IMR-90 (cell line): ENCODE measurements at regions of chr2 and their contacts with region 1.

Region 1: GRCh38 chr2:148720501-148721001 is 76.0 kb downstream of the EPC2 start:
- DNase-seq: peak; percentile 57
- ATAC-seq: peak; percentile 75
- H3K4me3 ChIP-seq: no peak overlapping the region
- H3K27ac ChIP-seq: no peak overlapping the region
- H3K4me1 ChIP-seq: peaks cover 11% of the 10 kb centered on the region
- H3K27me3 ChIP-seq: no peaks in the 10 kb centered on the region
- CTCF ChIP-seq: no peak
- POLR2A ChIP-seq: no peak
- RAD21 ChIP-seq: no peak

Region 2: DNA sequence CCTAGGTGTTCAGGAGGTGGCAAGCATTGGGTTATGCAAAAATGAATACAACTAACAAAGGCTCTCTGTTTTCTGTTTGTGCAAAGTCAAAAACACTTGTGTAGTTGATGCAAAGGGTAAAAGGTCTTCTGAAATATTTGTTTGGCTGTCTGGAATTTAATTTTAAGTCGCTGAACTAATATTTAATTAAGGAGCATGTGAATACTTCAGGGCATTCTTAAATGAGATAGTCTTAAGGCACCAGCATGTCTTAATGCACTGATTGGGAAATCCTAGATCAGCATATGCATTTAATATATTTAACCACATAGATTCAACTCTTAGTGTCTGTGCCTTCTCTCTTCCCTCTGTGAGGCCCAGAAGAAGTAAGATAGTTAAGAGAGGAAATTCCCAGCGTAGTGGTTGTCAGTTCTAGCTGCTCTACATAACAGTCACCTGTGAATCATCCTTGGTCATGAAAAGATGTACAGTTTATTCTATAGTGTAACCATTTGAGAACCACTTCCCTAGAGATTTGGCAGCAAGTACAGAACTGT is 35.9 kb after region 1 on chr2:
- CTCF ChIA-PET with region 1: no interaction called
- POLR2A ChIA-PET with region 1: no interaction called
- dilution Hi-C with region 1: no loop called
- in situ Hi-C with region 1: no loop called
- intact Hi-C with region 1: loop called (anchors 5 kb)
- DNase-seq: peak; percentile 92
- ATAC-seq: peak; percentile 90
- H3K4me3 ChIP-seq: no peak overlapping the region
- H3K27ac ChIP-seq: no peak overlapping the region
- H3K4me1 ChIP-seq: peaks cover 3% of the 10 kb centered on the region
- H3K27me3 ChIP-seq: no peaks in the 10 kb centered on the region
- CTCF ChIP-seq: no peak
- POLR2A ChIP-seq: no peak
- RAD21 ChIP-seq: no peak